H1 (cell line): ENCODE measurements at regions of chr12 and their contacts with region 1.

Region 1: GRCh38 chr12:110468212-110469048 is at the starts of genes FAM216A and GPN3:
- DNase-seq: peak; percentile 94
- H3K4me3 ChIP-seq: peak within 1 kb of the TSS; percentile 85 to 96 (median 90)
- H3K27ac ChIP-seq: peak within 1 kb of the TSS; percentile 92
- H3K4me1 ChIP-seq: peaks cover 0 to 7% (median 1%) of the 10 kb centered on the region in 4 experiments; a peak in 3 of 7 replicates
- H3K27me3 ChIP-seq: no peaks in the 10 kb centered on the region
- CTCF ChIP-seq: no peak
- EP300 ChIP-seq: no peak
- POLR2A ChIP-seq: peak; percentile 66 to 72; a peak in 2 of 3 replicates
- RAD21 ChIP-seq: no peak
- total RNA-seq, gene FAM216A: 19.8 and 22.2 TPM in 2 replicates
- total RNA-seq, gene GPN3: 49.7 and 50.8 TPM in 2 replicates

Region 2: DNA sequence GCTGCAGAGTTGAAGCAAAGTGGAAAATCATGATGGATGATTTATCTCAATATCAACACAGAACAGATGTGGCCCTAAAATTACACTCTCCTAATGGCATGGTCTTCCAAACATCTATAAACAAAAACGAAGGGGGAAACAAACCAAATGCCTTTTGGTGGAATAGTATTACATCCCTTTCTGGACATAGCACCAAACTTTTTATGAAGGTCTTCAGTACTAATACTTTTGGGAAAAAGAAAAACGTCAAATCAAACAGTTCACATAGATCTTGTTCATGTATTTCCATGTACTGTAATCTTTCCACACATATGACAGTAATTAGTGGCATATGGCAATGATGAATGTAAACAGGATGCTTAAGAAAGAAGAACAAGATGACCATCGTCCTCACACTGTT is 42.0 kb before region 1 on chr12:
- CTCF ChIA-PET with region 1: interaction called, 3 read pairs
- POLR2A ChIA-PET with region 1: interaction called, 10 read pairs
- DNase-seq: no peak
- H3K4me3 ChIP-seq: no peak overlapping the region
- H3K27ac ChIP-seq: no peak overlapping the region
- H3K4me1 ChIP-seq: peaks cover 3 to 5% (median 3%) of the 10 kb centered on the region in 4 experiments; a peak in 4 of 7 replicates
- H3K27me3 ChIP-seq: no peaks in the 10 kb centered on the region
- CTCF ChIP-seq: no peak
- EP300 ChIP-seq: no peak
- POLR2A ChIP-seq: no peak
- RAD21 ChIP-seq: no peak

Region 3: DNA sequence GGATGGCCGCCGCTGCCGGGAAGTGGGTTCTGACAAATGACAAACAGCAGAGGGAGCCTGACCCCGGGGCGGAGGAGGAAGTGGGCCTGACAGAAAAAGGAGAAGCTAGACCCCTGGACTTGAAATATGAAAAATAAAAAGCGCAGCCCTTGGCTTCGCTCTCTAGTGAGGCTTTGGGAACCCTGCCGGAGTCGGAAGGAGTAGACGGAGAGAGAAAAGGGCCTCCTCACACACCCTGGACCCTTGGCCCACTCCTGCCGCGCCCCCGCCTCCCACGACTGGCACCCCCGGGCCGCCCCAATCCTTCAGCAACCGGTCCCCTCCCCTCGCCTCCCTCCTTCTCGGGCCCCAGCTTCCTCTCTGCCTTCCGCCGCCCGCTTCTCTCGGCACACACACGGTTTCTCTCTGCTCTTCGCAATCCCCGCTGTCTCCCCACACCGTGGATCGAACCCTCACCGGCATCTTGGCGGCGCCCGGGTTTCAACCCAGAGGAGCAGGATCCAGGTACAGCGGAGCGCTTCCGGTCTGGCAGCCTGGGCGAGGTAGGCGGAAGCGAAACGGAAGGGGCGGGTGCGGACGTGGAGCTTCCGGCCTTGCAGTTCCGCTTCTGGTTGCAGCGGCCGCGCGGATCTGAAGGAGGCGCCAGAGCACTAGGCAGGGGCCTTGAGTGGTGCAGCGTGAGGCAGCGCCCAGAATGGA is 18.5 kb before region 1 on chr12 and contains the start of gene ARPC3:
- CTCF ChIA-PET with region 1: interaction called, 67 read pairs
- POLR2A ChIA-PET with region 1: interaction called, 57 read pairs
- DNase-seq: peak; percentile 89 to 94
- H3K4me3 ChIP-seq: peak within 1 kb of the TSS; percentile 63 to 93 (median 87)
- H3K27ac ChIP-seq: peak within 1 kb of the TSS; percentile 11; the same call in 1 of the 2 replicates
- H3K4me1 ChIP-seq: peaks cover 0 to 3% (median 0%) of the 10 kb centered on the region in 4 experiments; a peak in 1 of 7 replicates
- H3K27me3 ChIP-seq: no peaks in the 10 kb centered on the region
- CTCF ChIP-seq: peak; percentile 79 to 86 (median 81)
- EP300 ChIP-seq: no peak
- POLR2A ChIP-seq: peak in 1 of 2 experiments; percentile 56; a peak in 1 of 3 replicates
- RAD21 ChIP-seq: peak; percentile 78 to 86
- total RNA-seq, gene ARPC3: 160 and 170 TPM in 2 replicates

Region 4: DNA sequence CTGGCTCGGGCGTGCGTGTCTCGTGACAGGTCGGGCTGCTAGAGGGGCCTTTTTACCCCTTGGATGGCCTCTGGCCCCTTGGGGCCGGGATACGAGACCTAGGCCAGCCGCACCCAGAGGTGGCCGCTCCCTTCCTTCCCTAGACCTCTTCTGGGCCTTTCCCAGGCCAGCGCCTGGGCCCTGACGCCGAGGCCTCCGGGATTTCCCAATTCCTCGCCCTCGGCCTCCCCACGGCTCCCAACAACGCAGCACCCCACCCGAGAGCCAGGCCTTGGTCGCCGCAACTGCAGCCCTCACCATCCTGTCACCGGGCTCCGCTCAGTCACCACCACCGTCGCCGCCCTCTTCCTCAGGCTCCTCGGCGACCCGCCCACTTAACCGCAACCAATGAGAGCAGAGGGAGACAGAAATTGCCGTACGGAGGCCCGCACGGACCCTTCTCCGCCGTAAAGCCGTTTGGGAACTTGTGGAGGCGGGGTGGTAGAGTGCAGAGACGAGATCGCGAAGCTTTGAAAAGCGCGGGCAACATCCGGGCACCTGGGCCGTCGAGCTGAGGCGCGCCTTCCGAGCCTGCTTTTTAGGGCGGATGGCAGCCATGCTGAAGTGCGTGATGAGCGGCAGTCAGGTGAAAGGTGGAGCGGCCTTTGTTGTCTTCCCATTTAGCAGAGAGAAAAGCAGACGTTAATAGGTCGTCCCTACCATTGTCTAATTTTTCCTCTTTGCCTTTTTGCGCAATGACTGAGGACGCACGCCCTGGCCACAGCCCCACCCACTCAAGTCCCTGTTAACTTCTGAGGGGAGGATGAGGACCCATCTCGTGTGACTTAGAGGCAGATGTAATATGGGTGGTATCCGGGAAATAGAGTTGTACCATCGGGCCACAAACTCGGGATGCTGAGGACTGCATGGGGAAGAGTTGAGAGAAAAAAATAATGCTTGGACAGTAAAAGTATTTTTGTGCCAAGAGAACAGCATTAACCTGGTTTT is 33.6 kb after region 1 on chr12 and contains the starts of genes RAD9B and VPS29:
- CTCF ChIA-PET with region 1: interaction called, 8 read pairs
- POLR2A ChIA-PET with region 1: interaction called, 29 read pairs
- DNase-seq: peak; percentile 96 to 99
- H3K4me3 ChIP-seq: peak within 1 kb of the TSS; percentile 83 to 94 (median 93)
- H3K27ac ChIP-seq: no peak within 1 kb of the TSS
- H3K4me1 ChIP-seq: no peaks in the 10 kb centered on the region
- H3K27me3 ChIP-seq: peaks cover 3 to 13% (median 12%) of the 10 kb centered on the region in 4 experiments
- CTCF ChIP-seq: no peak
- EP300 ChIP-seq: peak in 1 of 2 experiments; percentile 33; a peak in 1 of 3 replicates
- POLR2A ChIP-seq: peak in 1 of 2 experiments; percentile 38; a peak in 1 of 3 replicates
- RAD21 ChIP-seq: no peak
- total RNA-seq, gene RAD9B: not detected in 2 replicates
- total RNA-seq, gene VPS29: 59.0 and 62.5 TPM in 2 replicates

Region 5: DNA sequence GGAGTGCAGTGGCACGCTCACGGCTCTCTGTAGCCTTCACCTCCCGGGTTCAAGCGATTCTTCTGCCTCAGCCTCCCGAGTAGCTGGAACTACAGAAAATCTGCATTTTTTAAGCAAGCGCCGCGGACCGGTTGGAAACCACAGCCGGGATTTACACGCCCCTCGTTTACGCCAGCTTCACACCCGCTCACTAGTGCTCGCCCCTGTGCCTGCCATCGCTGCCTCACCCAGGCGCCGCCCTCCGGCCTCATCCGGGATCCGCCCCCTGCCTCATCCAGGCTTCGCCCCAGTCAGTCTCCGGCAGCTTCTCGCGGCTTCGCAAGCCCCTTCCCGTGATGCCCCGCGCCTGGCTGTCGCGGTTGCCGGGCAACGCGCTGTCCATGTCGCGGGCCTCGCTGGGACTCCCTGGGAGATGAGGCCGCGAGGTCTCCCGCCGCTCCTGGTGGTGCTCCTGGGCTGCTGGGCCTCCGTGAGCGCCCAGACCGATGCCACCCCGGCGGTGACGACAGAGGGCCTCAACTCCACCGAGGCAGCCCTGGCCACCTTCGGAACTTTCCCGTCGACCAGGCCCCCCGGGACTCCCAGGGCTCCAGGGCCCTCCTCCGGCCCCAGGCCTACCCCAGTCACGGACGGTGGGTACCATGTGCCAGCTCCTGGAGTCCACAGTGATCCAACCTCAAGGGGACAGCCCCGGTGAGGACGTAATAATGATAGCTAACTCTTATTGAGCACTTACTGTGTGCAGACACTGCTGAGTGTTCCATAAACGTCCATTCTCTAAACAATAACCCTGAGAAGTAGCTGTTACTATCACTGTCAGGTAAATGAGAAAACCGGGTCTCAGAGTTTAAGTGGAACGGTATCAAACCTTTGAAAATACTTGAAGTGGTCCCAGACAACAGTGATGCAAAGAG is 145.6 kb after region 1 on chr12 and contains the start of gene TCTN1:
- CTCF ChIA-PET with region 1: no interaction called
- POLR2A ChIA-PET with region 1: interaction called, 13 read pairs
- DNase-seq: peak; percentile 84 to 97
- H3K4me3 ChIP-seq: peak within 1 kb of the TSS; percentile 39 to 72 (median 66)
- H3K27ac ChIP-seq: no peak within 1 kb of the TSS
- H3K4me1 ChIP-seq: no peaks in the 10 kb centered on the region
- H3K27me3 ChIP-seq: no peaks in the 10 kb centered on the region
- CTCF ChIP-seq: no peak
- EP300 ChIP-seq: no peak
- POLR2A ChIP-seq: peak in 1 of 2 experiments; percentile 60; a peak in 1 of 3 replicates
- RAD21 ChIP-seq: no peak
- total RNA-seq, gene TCTN1: 11.1 and 16.4 TPM in 2 replicates